ENCODE measurements at regions of chr15 and their contacts with region 1.

Region 1: DNA sequence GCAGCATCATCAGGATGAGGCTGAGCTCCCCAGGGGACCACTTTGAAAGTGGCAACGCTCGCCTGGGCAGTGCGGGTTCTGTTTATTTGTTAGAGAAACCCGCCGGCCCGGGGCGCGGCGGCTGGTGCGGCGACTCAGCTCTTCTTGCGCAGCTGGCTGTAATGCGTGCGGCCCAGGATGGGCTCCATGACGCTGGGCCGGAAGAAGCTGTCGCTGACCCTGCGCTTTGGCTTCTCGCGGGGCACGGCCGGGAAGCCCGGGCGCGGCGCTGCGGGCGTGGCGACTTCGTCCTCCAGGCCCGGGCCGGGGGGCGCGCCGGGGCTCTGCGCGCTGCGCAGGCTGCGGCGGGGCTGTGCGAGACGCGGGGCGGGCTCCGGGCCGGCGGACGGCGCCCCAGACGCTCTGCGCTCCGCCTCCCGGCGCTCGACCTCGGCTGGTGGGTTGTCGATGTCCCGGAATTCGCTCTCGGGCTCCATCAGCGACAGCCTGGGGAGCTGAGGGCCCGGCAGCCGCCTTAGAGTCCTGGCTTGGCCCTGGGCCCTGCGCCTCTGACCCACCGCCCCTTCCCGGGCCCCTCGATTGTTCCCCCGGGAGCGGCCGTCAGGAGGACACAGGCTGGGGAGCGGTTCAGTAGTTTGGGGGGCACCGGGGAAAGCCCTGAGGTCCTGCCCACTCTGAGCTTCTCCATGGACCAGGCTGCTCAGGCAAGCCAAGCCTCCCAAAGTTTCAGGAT is 10.3 kb upstream of the KIF7 start:
- DNase-seq: peak; percentile 36
- H3K4me3 ChIP-seq: peak overlapping the region in 2 of 3 experiments; percentile 30 to 33
- H3K27ac ChIP-seq: no peak overlapping the region
- H3K4me1 ChIP-seq: peaks cover 20% of the 10 kb centered on the region
- H3K27me3 ChIP-seq: no peaks in the 10 kb centered on the region
- CTCF ChIP-seq: no peak
- POLR2A ChIP-seq: peak; percentile 66

Region 2: DNA sequence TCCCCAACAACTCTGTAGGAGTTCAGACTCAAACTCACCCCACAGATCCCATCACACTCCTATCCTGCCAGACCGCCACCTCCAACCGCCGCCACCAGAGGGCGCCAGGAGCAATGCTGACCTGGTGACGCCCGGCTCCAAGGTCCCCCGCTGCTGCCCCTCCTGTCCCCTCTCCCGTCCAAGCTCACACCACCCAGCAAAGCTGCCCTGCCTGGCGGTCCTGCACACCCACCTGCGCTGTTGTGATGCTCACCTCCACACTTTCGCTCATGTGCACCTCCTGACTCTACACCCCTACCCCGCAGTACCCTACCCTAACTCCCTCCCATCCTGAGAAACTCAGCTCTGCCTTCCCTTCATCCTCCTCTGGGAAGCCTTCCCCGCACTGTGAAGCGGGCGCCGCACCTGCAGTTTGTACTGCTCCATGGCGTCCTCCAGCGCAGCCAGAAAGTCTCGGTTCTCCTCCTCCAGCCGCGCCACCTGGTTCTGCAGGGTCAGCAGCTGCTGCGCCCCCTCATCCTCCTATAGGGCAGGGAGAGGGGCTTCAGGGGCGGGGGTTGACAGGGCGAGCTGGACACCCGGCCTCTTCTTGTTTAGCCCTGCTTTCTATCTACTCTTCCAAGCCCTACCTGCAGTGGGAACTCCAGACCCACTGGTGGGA is 18.3 kb before region 1 on chr15:
- CTCF ChIA-PET with region 1: interaction called, 55 read pairs
- POLR2A ChIA-PET with region 1: interaction called, 3 read pairs
- dilution Hi-C with region 1: no loop called
- intact Hi-C with region 1: no loop called
- DNase-seq: peak; percentile 56
- H3K4me3 ChIP-seq: no peak overlapping the region
- H3K27ac ChIP-seq: no peak overlapping the region
- H3K4me1 ChIP-seq: no peaks in the 10 kb centered on the region
- H3K27me3 ChIP-seq: no peaks in the 10 kb centered on the region
- CTCF ChIP-seq: peak; percentile 95
- POLR2A ChIP-seq: no peak

Region 3: GRCh38 chr15:89654847-89655805 is 10.5 kb before region 1 on chr15 and contains the start of gene KIF7:
- CTCF ChIA-PET with region 1: interaction called, 3 read pairs
- POLR2A ChIA-PET with region 1: interaction called, 3 read pairs
- dilution Hi-C with region 1: no loop called
- intact Hi-C with region 1: loop called (anchors 1 kb)
- DNase-seq: peak; percentile 63
- H3K4me3 ChIP-seq: peak within 1 kb of the TSS; percentile 58 to 67 (median 65)
- H3K27ac ChIP-seq: no peak within 1 kb of the TSS
- H3K4me1 ChIP-seq: peaks cover 7% of the 10 kb centered on the region
- H3K27me3 ChIP-seq: no peaks in the 10 kb centered on the region
- CTCF ChIP-seq: no peak
- POLR2A ChIP-seq: no peak
- total RNA-seq, gene KIF7: 11.3 and 13.1 TPM in 2 replicates